Caco-2 (cell line): ENCODE measurements at regions of chr9 and their contacts with region 1.

Region 1: DNA sequence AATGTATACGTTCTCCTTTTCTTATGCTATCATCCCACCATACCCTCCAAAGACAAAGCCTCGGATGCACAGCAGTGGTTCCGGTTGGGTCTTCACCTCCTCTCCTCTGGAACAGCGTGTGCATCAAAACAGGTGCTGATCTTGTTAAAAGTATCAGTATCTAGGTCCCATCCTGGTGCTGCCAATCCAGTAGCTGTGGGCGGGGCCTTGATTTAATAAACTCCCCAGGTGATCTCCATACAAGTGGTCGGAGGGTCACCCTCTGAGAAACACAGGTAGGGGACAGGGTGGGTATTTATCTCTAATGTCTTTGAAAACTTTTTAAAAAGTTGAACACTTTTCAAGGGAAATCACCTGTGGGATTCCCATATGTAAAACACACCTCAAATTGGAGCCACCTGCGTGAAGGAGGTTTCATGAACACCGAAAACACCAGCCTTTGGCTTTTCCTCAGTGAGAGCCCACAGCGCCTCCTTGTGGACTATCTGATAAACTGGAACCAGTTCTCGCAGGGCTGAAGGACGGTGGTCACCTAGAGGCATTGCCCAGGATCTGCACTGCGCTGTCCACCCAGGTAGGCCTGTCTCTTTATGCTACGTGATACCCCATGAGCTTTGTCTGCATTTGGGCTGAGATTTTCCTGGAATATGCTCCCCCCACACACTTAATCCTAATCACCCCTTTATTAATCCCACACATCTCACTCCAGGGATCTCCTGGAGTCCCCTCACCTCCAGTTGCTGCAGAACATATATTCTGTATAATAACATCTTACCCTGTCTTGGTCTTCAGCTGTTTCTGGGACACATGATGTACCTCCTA is 80.5 kb upstream of the EPB41L4B start:
- DNase-seq: peak; percentile 78 to 81
- H3K4me3 ChIP-seq: no peak overlapping the region
- H3K4me3 Mint-ChIP-seq: no peak overlapping the region
- H3K27ac Mint-ChIP-seq: no peak overlapping the region
- H3K4me1 ChIP-seq: no peaks in the 10 kb centered on the region
- H3K4me1 Mint-ChIP-seq: no peaks in the 10 kb centered on the region
- H3K27me3 ChIP-seq: no peaks in the 10 kb centered on the region
- H3K27me3 Mint-ChIP-seq: no peaks in the 10 kb centered on the region
- CTCF ChIP-seq: peak; percentile 89 to 90

Region 2: DNA sequence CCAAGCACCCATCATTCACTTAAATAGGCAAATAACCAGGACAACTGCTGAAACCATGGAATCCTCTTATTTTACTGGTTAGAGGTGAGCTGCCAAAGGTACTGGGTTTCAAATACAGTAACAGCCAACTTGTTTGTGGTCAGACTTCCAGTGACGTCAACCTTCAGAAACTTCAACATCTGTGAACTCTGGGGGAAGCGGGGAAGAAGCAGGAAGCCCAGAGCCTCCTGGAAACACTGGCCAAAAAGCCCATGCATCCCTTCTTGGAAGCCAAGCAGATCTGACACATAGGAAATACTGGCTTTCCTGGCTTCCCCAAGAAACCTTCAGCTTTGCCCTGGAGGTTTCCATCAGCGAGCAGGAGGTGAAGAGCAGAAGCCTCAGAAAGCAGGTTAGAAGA is 229.5 kb before region 1 on chr9:
- CTCF ChIA-PET with region 1: no interaction called
- POLR2A ChIA-PET with region 1: no interaction called
- intact Hi-C with region 1: no loop called
- DNase-seq: no peak
- H3K4me3 ChIP-seq: no peak overlapping the region
- H3K4me3 Mint-ChIP-seq: no peak overlapping the region
- H3K27ac Mint-ChIP-seq: no peak overlapping the region
- H3K4me1 ChIP-seq: no peaks in the 10 kb centered on the region
- H3K4me1 Mint-ChIP-seq: no peaks in the 10 kb centered on the region
- H3K27me3 ChIP-seq: no peaks in the 10 kb centered on the region
- H3K27me3 Mint-ChIP-seq: no peaks in the 10 kb centered on the region
- CTCF ChIP-seq: no peak

Region 3: DNA sequence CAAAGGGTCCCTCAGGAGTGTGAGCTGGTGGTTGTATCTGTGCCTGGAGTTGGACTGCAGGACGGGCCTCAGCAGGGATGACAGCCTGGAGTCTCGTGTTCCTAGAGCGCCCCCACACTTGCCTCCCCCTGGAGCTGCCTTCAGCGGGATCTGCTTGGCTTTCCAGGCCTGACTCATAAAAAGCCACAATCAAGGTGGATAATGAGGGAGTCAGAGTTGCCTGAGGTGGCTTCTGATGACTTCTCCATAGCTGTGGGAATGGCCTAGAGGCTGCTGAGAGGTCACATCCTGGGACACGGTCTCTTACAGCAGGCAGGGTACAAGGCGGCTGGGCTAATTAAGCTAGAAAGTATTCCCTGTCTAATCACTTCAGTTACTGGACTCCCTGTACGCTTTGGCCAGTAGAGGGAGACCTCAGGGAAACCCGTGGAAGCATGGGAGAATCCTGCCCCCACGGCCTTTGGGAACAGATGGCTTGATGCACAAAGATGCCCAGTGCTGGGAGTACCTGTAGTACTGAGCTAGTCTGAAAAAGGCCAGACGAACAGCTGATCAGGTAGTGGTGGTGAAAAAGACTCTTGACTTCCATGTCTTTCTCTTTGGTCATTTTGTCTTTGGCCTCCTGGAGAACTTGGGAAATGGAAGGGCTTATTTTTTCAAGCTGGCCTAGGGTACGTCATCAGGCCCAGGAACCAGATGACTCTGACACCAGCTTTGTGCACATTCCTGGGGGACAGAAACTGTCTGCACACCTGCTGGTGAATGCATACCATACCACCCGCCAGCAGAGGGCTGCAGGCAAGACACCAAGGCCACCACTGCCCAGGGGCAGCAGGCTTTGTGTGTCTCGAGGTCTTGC is 218.2 kb before region 1 on chr9:
- CTCF ChIA-PET with region 1: no interaction called
- POLR2A ChIA-PET with region 1: no interaction called
- intact Hi-C with region 1: loop called (anchors 1 kb)
- DNase-seq: peak; percentile 71 to 76
- H3K4me3 ChIP-seq: no peak overlapping the region
- H3K4me3 Mint-ChIP-seq: no peak overlapping the region
- H3K27ac Mint-ChIP-seq: no peak overlapping the region
- H3K4me1 ChIP-seq: no peaks in the 10 kb centered on the region
- H3K4me1 Mint-ChIP-seq: no peaks in the 10 kb centered on the region
- H3K27me3 ChIP-seq: no peaks in the 10 kb centered on the region
- H3K27me3 Mint-ChIP-seq: no peaks in the 10 kb centered on the region
- CTCF ChIP-seq: peak; percentile 28 to 68

Region 4: GRCh38 chr9:109244157-109245132 is 156.9 kb before region 1 on chr9:
- CTCF ChIA-PET with region 1: no interaction called
- POLR2A ChIA-PET with region 1: no interaction called
- intact Hi-C with region 1: loop called (anchors 1 kb)
- DNase-seq: peak; percentile 78 to 82
- H3K4me3 ChIP-seq: no peak overlapping the region
- H3K4me3 Mint-ChIP-seq: no peak overlapping the region
- H3K27ac Mint-ChIP-seq: no peak overlapping the region
- H3K4me1 ChIP-seq: no peaks in the 10 kb centered on the region
- H3K4me1 Mint-ChIP-seq: no peaks in the 10 kb centered on the region
- H3K27me3 ChIP-seq: no peaks in the 10 kb centered on the region
- H3K27me3 Mint-ChIP-seq: no peaks in the 10 kb centered on the region
- CTCF ChIP-seq: peak; percentile 95 to 96